B cell (primary cell): ENCODE measurements at regions of chr16 and their contacts with region 1.

Region 1: DNA sequence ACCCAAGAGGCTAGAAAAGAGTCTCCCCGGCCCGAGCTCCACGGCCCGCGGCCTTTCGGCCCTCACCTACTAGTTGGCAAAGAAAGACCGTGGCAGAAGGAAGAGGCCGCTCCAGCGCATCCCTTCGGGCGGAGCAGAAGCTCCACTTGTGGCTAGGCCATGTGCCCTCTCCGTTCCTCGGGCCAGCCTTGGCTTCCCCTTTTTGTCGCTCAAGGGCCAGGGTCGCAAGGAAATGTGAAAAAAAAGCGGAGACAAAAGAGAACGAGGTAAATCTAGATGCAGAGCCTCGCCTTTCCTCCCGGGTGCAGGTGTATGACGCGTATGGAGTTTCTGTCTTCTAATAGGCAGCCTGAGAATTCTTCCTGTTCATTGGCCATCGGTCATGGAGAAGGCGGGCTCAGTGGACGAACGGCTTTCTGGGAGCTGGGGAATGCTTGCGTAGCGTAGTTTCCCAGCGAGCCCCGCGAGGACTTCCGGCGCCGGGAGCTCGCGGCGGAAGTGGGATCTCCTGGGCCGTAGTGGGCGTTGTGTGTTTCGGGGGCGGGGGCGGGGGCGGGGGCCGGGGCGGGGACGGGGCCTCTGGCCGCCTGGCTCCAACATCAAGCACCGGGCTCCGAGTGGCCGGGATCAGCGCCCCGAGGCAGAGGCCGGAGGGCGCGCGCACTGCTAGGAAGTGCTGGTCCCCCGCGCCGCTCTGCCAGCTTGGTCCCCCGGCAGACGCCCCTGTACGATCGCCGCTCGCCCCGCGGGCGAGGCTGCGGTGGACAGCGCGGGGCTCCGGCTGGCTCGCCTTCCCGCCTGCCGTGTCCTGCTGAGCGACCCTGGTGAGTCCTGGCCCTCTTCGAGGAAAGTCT is at the start of gene ZNF213:
- DNase-seq: peak; percentile 97
- ATAC-seq: peak; percentile 98
- H3K4me3 ChIP-seq: peak within 1 kb of the TSS; percentile 70 to 99 (median 86)
- H3K4me3 Mint-ChIP-seq: peak within 1 kb of the TSS; percentile 98
- H3K27ac ChIP-seq: peak within 1 kb of the TSS; percentile 91 to 93
- H3K27ac Mint-ChIP-seq: peak within 1 kb of the TSS; percentile 97
- H3K4me1 ChIP-seq: peaks cover 15 to 20% of the 10 kb centered on the region in 2 donors
- H3K4me1 Mint-ChIP-seq: peaks cover 29% of the 10 kb centered on the region
- H3K27me3 ChIP-seq: no peaks in the 10 kb centered on the region
- H3K27me3 Mint-ChIP-seq: no peaks in the 10 kb centered on the region
- CTCF ChIP-seq: no peak
- total RNA-seq, gene ZNF213: 7.2 and 9.5 TPM in 2 replicates

Region 2: GRCh38 chr16:3029537-3030402 is 105.0 kb before region 1 on chr16:
- CTCF ChIA-PET with region 1: interaction called, 133 read pairs
- POLR2A ChIA-PET with region 1: interaction called, 3 read pairs
- intact Hi-C with region 1: loop called (anchors 1 kb)
- DNase-seq: peak; percentile 54
- ATAC-seq: no peak
- H3K4me3 ChIP-seq: no peak overlapping the region
- H3K4me3 Mint-ChIP-seq: peak overlapping the region; percentile 35
- H3K27ac ChIP-seq: no peak overlapping the region
- H3K27ac Mint-ChIP-seq: no peak overlapping the region
- H3K4me1 ChIP-seq: peaks cover 25 to 28% of the 10 kb centered on the region in 2 donors
- H3K4me1 Mint-ChIP-seq: peaks cover 20% of the 10 kb centered on the region
- H3K27me3 ChIP-seq: peaks cover 0 to 58% (median 28%) of the 10 kb centered on the region in 4 experiments
- H3K27me3 Mint-ChIP-seq: peaks cover 40% of the 10 kb centered on the region
- CTCF ChIP-seq: no peak

Region 3: DNA sequence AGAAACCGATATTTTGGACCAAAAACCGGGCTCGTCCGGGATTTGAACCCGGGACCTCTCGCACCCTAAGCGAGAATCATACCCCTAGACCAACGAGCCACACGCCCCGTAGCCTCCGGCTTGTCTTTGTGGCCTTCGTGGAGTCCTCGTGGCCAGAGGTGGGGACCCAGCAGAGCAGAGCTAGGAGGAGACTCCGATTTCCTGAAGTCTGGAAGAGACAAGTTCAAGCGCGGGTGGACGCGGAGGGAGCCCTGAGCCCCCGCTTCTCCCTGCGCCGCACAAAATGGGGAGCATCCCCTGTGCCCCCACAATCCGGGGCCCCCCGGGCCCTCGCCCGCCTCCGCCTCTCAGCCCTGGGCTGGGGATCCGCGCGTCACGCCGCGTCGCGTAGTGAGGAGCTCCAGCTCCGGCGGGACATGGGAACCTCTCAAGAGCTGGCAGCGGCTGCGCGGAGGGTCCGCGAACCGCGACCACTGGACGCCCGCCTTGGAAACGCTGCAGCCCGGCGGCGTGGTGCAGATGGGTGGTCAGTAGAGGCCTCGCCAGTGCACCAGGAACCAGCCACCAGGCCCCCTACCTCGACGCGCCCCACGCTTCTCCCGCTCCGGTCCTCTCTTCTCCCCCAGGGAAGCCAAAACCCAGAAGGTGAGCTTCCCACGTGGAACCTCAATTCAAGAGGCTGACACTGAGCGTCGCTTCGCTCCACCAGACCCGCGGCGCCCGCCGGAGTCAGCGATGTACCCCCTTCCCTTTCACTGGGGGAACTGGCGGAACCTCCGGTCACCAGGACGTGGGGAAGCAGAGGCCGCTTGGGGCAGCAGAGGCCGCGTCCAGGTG is 48.0 kb after region 1 on chr16:
- CTCF ChIA-PET with region 1: interaction called, 4 read pairs
- POLR2A ChIA-PET with region 1: interaction called, 11 read pairs
- intact Hi-C with region 1: no loop called
- DNase-seq: peak; percentile 63
- ATAC-seq: peak; percentile 43
- H3K4me3 ChIP-seq: peak overlapping the region in 4 of 5 experiments; percentile 11 to 38 (median 28)
- H3K4me3 Mint-ChIP-seq: peak overlapping the region; percentile 73
- H3K27ac ChIP-seq: no peak overlapping the region
- H3K27ac Mint-ChIP-seq: peak overlapping the region; percentile 74
- H3K4me1 ChIP-seq: peaks cover 15 to 16% of the 10 kb centered on the region in 2 donors
- H3K4me1 Mint-ChIP-seq: peaks cover 21% of the 10 kb centered on the region
- H3K27me3 ChIP-seq: peaks cover 0 to 88% (median 53%) of the 10 kb centered on the region in 4 experiments
- H3K27me3 Mint-ChIP-seq: peaks cover 79% of the 10 kb centered on the region
- CTCF ChIP-seq: peak; percentile 33

Region 4: GRCh38 chr16:3242709-3243108 is 107.9 kb after region 1 on chr16:
- CTCF ChIA-PET with region 1: no interaction called
- POLR2A ChIA-PET with region 1: no interaction called
- intact Hi-C with region 1: no loop called
- DNase-seq: no peak
- ATAC-seq: no peak
- H3K4me3 ChIP-seq: no peak overlapping the region
- H3K4me3 Mint-ChIP-seq: no peak overlapping the region
- H3K27ac ChIP-seq: no peak overlapping the region
- H3K27ac Mint-ChIP-seq: no peak overlapping the region
- H3K4me1 ChIP-seq: no peaks in the 10 kb centered on the region
- H3K4me1 Mint-ChIP-seq: no peaks in the 10 kb centered on the region
- H3K27me3 ChIP-seq: peaks cover 0 to 14% (median 0%) of the 10 kb centered on the region in 4 experiments
- H3K27me3 Mint-ChIP-seq: peaks cover 46% of the 10 kb centered on the region
- CTCF ChIP-seq: no peak

Region 5: GRCh38 chr16:3578610-3579551 is 444.1 kb after region 1 on chr16:
- CTCF ChIA-PET with region 1: no interaction called
- POLR2A ChIA-PET with region 1: no interaction called
- intact Hi-C with region 1: no loop called
- DNase-seq: peak; percentile 54
- ATAC-seq: peak; percentile 62
- H3K4me3 ChIP-seq: peak overlapping the region in 4 of 5 experiments; percentile 11 to 93 (median 24)
- H3K4me3 Mint-ChIP-seq: peak overlapping the region; percentile 91
- H3K27ac ChIP-seq: peak overlapping the region; percentile 56 to 89
- H3K27ac Mint-ChIP-seq: peak overlapping the region; percentile 97
- H3K4me1 ChIP-seq: peaks cover 45 to 54% of the 10 kb centered on the region in 2 donors
- H3K4me1 Mint-ChIP-seq: peaks cover 56% of the 10 kb centered on the region
- H3K27me3 ChIP-seq: no peaks in the 10 kb centered on the region
- H3K27me3 Mint-ChIP-seq: no peaks in the 10 kb centered on the region
- CTCF ChIP-seq: no peak